Activated T-helper 1 cell treated with anti-CD3 and anti-CD28 coated beads, Interleukin-12 subunit alpha, Interleukin-12 subunit beta, Interleukin-2, Interleukin-4 antibody, amounts not matched to agents 30 ng/mL and 10 ng/mL and 1 ng/mL, durations not matched to agents 14 hours and 24 hours and 36 hours (primary cell): ENCODE measurements at regions of chr5 and their contacts with region 1.

Region 1: GRCh38 chr5:143101121-143101520 is 302.4 kb downstream of the NR3C1 start:
- DNase-seq: peak; percentile 13
- H3K4me3 Mint-ChIP-seq: peak overlapping the region; percentile 48
- H3K27ac Mint-ChIP-seq: peak overlapping the region; percentile 92
- H3K4me1 Mint-ChIP-seq: peaks cover 53% of the 10 kb centered on the region
- H3K27me3 Mint-ChIP-seq: no peaks in the 10 kb centered on the region

Region 2: GRCh38 chr5:143002459-143003328 is 98.4 kb before region 1 on chr5:
- intact Hi-C with region 1: loop called (anchors 1 kb)
- DNase-seq: peak; percentile 66
- H3K4me3 Mint-ChIP-seq: peak overlapping the region; percentile 75
- H3K27ac Mint-ChIP-seq: peak overlapping the region; percentile 98
- H3K4me1 Mint-ChIP-seq: peaks cover 89% of the 10 kb centered on the region
- H3K27me3 Mint-ChIP-seq: no peaks in the 10 kb centered on the region

Region 3: DNA sequence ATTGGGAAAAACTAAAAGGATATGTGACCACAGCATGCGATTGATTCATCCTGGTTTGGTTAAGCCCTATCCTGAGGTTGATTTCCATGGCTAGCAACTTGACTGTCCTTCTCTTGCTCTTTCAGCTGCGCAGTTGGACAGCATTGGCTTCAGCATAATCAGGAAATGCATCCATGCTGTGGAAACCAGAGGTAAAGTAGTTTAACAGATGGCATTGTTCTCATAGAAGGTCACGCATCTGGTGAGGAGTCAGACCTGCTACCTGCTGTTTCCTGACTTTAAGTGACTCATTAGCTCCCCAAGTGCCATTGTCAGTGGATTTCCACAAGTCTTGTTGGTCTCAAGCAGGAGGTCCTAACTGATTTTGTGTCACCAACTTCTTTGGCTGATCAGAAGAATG is 64.0 kb before region 1 on chr5:
- intact Hi-C with region 1: loop called (anchors 1 kb)
- DNase-seq: no peak
- H3K4me3 Mint-ChIP-seq: no peak overlapping the region
- H3K27ac Mint-ChIP-seq: peak overlapping the region; percentile 83
- H3K4me1 Mint-ChIP-seq: peaks cover 65% of the 10 kb centered on the region
- H3K27me3 Mint-ChIP-seq: no peaks in the 10 kb centered on the region

Region 4: DNA sequence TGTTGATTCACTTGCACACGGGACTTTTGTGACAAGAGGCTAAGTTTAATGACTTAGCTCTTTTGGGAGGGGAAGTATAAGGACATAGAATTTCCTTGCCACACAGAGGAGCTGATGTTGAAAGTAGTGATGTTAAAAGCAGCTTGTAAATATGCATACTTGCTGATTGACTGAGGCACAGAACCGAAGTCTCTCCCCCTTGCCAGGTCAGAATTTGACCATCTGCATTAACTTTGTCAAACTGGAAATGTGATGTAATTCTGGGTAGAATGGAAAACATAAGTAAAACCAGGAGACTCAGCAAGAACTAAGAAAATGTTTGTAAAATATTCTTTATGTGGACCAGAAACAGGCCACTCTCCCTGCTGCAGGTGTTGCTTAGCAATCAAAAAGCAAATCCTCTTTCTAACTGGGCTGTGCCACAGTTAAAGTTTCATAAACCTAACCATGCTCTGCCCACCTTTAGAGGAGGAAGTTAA is 18.2 kb after region 1 on chr5:
- intact Hi-C with region 1: loop called (anchors 1 kb)
- DNase-seq: no peak
- H3K4me3 Mint-ChIP-seq: no peak overlapping the region
- H3K27ac Mint-ChIP-seq: peak overlapping the region; percentile 79
- H3K4me1 Mint-ChIP-seq: peaks cover 60% of the 10 kb centered on the region
- H3K27me3 Mint-ChIP-seq: peaks cover 1% of the 10 kb centered on the region

Region 5: GRCh38 chr5:143229896-143230675 is 129.0 kb after region 1 on chr5:
- intact Hi-C with region 1: loop called (anchors 1 kb)
- DNase-seq: peak; percentile 45
- H3K4me3 Mint-ChIP-seq: peak overlapping the region; percentile 43
- H3K27ac Mint-ChIP-seq: peak overlapping the region; percentile 87
- H3K4me1 Mint-ChIP-seq: peaks cover 41% of the 10 kb centered on the region
- H3K27me3 Mint-ChIP-seq: no peaks in the 10 kb centered on the region

Region 6: DNA sequence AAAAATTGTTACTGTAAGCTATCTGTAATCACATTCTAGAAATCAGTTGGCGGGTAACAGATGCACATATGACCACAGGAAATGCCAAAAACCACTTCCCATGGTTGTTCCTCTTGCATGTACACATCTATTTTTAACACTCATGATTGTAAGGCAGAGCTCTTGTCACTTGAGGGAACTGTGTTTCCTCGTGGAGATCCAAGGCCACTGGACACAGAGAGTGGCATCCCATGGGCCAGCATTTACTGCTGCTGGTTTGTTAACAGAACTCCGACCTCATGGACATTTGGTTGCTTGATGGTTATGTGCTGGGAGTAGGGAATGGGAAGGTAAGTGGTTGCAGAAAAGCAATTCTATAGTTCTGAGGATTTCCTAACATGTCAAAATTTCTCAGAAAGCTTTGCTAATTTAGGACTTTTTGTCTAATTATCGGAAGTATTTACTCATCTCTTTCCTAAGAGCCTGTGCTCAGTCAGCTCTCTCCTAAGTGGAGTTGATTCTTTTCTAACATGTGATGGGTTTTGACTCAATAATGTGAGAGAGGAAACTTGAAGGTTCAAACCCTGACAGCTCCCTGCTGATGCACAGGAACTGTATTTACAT is 504.4 kb after region 1 on chr5:
- intact Hi-C with region 1: loop called (anchors 5 kb)
- DNase-seq: peak; percentile 25
- H3K4me3 Mint-ChIP-seq: peak overlapping the region; percentile 56
- H3K27ac Mint-ChIP-seq: peak overlapping the region; percentile 91
- H3K4me1 Mint-ChIP-seq: peaks cover 38% of the 10 kb centered on the region
- H3K27me3 Mint-ChIP-seq: no peaks in the 10 kb centered on the region